T-cell (primary cell): ENCODE measurements at regions of chr17 and their contacts with region 1.

Region 1: GRCh38 chr17:28871056-28871579 is 16.3 kb downstream of the ERAL1 start:
- DNase-seq: peak in 32 of 35 experiments; percentile 10 to 61 (median 30)
- ATAC-seq: peak; percentile 99 to 100 (median 100)
- H3K4me3 ChIP-seq: no peak overlapping the region
- H3K4me3 Mint-ChIP-seq: peak overlapping the region in 1 of 3 donors; percentile 36
- H3K27ac ChIP-seq: peak overlapping the region; percentile 82
- H3K27ac Mint-ChIP-seq: peak overlapping the region; percentile 97 to 98
- H3K4me1 ChIP-seq: peaks cover 7 to 18% of the 10 kb centered on the region in 2 experiments
- H3K4me1 Mint-ChIP-seq: peaks cover 10 to 16% (median 12%) of the 10 kb centered on the region in 3 donors
- H3K27me3 ChIP-seq: no peaks in the 10 kb centered on the region
- H3K27me3 Mint-ChIP-seq: no peaks in the 10 kb centered on the region

Region 2: DNA sequence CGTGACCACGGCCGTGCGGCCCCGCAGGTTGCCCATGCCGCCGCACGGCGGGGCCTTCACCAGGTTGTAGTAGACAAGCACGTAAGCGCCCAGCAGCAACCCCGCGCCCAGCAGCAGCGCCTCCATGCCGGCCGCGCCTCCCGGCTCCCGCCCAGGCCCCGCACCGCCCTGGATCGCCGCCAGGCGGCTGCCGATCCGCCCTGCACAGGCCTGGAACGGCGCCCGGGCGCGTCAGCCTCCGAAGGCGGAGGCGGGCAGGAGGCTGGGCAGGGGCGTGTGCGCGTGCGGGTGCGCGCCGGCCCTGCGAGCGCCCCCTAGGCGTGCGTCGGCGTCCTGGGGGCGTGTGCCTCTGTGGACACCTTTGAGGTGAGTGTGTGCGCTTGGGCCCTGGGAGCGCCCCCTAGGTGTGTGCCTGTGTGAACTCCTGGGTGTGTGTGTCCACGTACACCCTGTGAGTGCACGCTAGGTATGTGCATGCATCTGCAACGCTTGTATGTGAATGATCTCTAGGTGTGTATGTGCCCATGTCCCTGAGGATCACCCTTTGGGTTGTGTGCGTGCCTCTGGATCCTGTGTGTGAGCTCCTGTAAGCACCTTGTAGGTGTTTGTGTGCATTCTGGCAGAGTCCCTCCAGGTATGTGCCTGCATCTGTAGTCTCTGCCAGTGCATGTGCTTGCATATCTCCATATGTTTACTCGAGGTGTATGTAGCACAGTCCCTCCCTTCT is 31.9 kb after region 1 on chr17 and contains the start of gene DHRS13:
- CTCF ChIA-PET with region 1: interaction called, 3 to 10 read pairs
- POLR2A ChIA-PET with region 1: no interaction called
- DNase-seq: peak; percentile 88 to 99 (median 93)
- ATAC-seq: peak; percentile 86 to 93 (median 89)
- H3K4me3 ChIP-seq: peak within 1 kb of the TSS; percentile 55 to 76
- H3K4me3 Mint-ChIP-seq: peak within 1 kb of the TSS; percentile 88 to 94 (median 89)
- H3K27ac ChIP-seq: peak within 1 kb of the TSS; percentile 62
- H3K27ac Mint-ChIP-seq: peak within 1 kb of the TSS; percentile 92 to 93
- H3K4me1 ChIP-seq: peaks cover 7 to 34% of the 10 kb centered on the region in 2 experiments
- H3K4me1 Mint-ChIP-seq: peaks cover 38 to 42% (median 42%) of the 10 kb centered on the region in 3 donors
- H3K27me3 ChIP-seq: no peaks in the 10 kb centered on the region
- H3K27me3 Mint-ChIP-seq: no peaks in the 10 kb centered on the region
- total RNA-seq, gene DHRS13: 23.1 to 44.9 (median 39.7) TPM

Region 3: GRCh38 chr17:28937044-28937729 is 66.1 kb after region 1 on chr17:
- CTCF ChIA-PET with region 1: no interaction called
- POLR2A ChIA-PET with region 1: no interaction called
- DNase-seq: no peak
- ATAC-seq: no peak
- H3K4me3 ChIP-seq: no peak overlapping the region
- H3K4me3 Mint-ChIP-seq: no peak overlapping the region
- H3K27ac ChIP-seq: no peak overlapping the region
- H3K27ac Mint-ChIP-seq: peak overlapping the region in 1 of 2 donors; percentile 81
- H3K4me1 ChIP-seq: peaks cover 18 to 35% of the 10 kb centered on the region in 2 experiments
- H3K4me1 Mint-ChIP-seq: peaks cover 75 to 92% (median 88%) of the 10 kb centered on the region in 3 donors
- H3K27me3 ChIP-seq: no peaks in the 10 kb centered on the region
- H3K27me3 Mint-ChIP-seq: no peaks in the 10 kb centered on the region

Region 4: GRCh38 chr17:30062372-30062771 is 1191.3 kb after region 1 on chr17:
- CTCF ChIA-PET with region 1: no interaction called
- POLR2A ChIA-PET with region 1: no interaction called
- DNase-seq: no peak
- ATAC-seq: no peak
- H3K4me3 ChIP-seq: no peak overlapping the region
- H3K4me3 Mint-ChIP-seq: no peak overlapping the region
- H3K27ac ChIP-seq: no peak overlapping the region
- H3K27ac Mint-ChIP-seq: no peak overlapping the region
- H3K4me1 ChIP-seq: no peaks in the 10 kb centered on the region
- H3K4me1 Mint-ChIP-seq: no peaks in the 10 kb centered on the region
- H3K27me3 ChIP-seq: peaks cover 0 to 21% of the 10 kb centered on the region in 2 experiments
- H3K27me3 Mint-ChIP-seq: peaks cover 9 to 18% of the 10 kb centered on the region in 2 donors